CD4-positive, alpha-beta memory T cell (primary cell): ENCODE measurements at regions of chr1 and their contacts with region 1.

Region 1: DNA sequence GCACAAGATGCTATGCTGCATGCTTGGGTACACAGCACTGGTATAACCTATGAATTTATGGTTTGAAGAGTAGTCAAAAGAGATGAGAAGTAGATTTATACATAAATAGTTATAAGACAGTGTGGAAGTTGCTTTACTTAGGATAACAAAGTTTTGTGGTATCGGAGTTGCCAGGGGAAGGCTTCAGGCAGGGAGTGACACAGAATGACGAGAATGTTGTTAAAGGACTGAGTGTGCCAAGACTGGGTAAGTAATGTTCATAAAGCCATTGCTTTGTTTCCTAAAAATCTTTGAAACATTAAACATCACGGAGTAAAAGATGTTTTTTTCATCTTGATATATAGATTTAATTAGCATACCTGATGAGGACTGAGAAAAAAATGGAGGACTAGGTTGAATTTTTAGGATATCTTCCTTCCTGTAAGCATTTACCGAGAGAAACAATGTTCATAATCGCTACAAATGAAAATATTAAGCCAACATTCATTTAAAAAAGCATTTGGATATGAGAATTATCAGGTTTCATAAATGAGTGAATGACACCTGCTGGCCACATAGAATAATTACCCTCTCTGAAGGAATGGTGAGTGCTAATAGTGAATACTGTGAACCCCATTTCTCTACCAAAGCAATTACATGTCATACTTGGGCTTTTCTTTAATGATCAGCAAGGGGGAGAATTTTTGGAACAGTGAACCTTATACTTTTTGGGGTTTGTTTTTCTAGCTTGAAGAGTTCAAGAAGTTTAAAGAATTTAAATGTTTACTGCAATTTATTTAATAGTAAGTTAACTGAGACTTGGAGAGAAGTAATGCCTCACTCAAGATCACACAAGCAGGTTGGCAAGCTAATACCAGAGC is 28.4 kb downstream of the EXTL2 start:
- DNase-seq: peak in 4 of 5 donors; percentile 16 to 26 (median 22)
- H3K4me3 ChIP-seq: no peak overlapping the region
- H3K4me3 Mint-ChIP-seq: no peak overlapping the region
- H3K27ac ChIP-seq: no peak overlapping the region
- H3K27ac Mint-ChIP-seq: no peak overlapping the region
- H3K4me1 ChIP-seq: no peaks in the 10 kb centered on the region
- H3K4me1 Mint-ChIP-seq: peaks cover 0 to 1% (median 0%) of the 10 kb centered on the region in 4 donors
- H3K27me3 ChIP-seq: no peaks in the 10 kb centered on the region
- H3K27me3 Mint-ChIP-seq: peaks cover 0 to 2% of the 10 kb centered on the region in 2 donors

Region 2: GRCh38 chr1:99808391-99809115 is 1057.7 kb before region 1 on chr1:
- CTCF ChIA-PET with region 1: interaction called, 33 read pairs
- POLR2A ChIA-PET with region 1: no interaction called
- intact Hi-C with region 1: loop called (anchors 1 kb)
- DNase-seq: peak; percentile 43 to 60 (median 57)
- H3K4me3 ChIP-seq: no peak overlapping the region
- H3K4me3 Mint-ChIP-seq: peak overlapping the region in 1 of 8 donors; percentile 4
- H3K27ac ChIP-seq: no peak overlapping the region
- H3K27ac Mint-ChIP-seq: peak overlapping the region in 1 of 7 donors; percentile 13
- H3K4me1 ChIP-seq: no peaks in the 10 kb centered on the region
- H3K4me1 Mint-ChIP-seq: peaks cover 0 to 6% (median 3%) of the 10 kb centered on the region in 4 donors
- H3K27me3 ChIP-seq: no peaks in the 10 kb centered on the region
- H3K27me3 Mint-ChIP-seq: peaks cover 10 to 13% of the 10 kb centered on the region in 2 donors

Region 3: GRCh38 chr1:100277866-100278265 is 588.4 kb before region 1 on chr1:
- CTCF ChIA-PET with region 1: no interaction called
- POLR2A ChIA-PET with region 1: no interaction called
- intact Hi-C with region 1: loop called (anchors 5 kb)
- DNase-seq: peak; percentile 26 to 52 (median 40)
- H3K4me3 ChIP-seq: no peak overlapping the region
- H3K4me3 Mint-ChIP-seq: no peak overlapping the region
- H3K27ac ChIP-seq: no peak overlapping the region
- H3K27ac Mint-ChIP-seq: peak overlapping the region in 3 of 7 donors; percentile 55 to 81 (median 64)
- H3K4me1 ChIP-seq: peaks cover 9% of the 10 kb centered on the region
- H3K4me1 Mint-ChIP-seq: peaks cover 27 to 45% (median 34%) of the 10 kb centered on the region in 4 donors
- H3K27me3 ChIP-seq: no peaks in the 10 kb centered on the region
- H3K27me3 Mint-ChIP-seq: no peaks in the 10 kb centered on the region

Region 4: DNA sequence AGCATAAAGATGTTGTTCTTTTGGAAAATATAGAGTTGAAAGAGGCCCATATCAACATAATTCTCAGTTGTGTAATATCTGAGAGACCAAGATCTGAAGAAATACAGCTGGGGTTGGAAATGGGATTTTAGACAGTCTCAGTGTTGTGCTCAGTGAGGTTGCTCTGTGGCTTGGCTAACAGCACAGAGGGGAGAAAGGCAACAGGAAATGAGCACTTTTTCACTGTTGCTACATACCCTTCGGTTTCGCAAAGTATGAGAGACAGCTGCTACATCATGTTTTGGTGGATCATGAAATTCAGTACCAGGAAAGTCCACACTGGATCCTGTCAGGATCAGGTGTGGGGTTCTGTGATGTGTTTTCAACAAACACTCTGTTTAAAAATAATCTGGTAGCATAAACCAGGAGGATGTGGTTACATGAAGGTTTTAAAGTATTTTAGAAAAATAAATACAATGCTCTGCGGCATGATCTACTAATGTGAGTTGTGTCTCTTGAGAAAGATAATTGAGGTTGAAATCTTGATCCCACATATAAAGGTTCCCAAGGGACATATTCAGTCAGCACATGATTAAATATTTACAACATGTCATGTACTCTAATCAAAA is 335.3 kb before region 1 on chr1:
- CTCF ChIA-PET with region 1: no interaction called
- POLR2A ChIA-PET with region 1: no interaction called
- intact Hi-C with region 1: loop called (anchors 10 kb)
- DNase-seq: peak in 4 of 5 donors; percentile 17 to 30 (median 26)
- H3K4me3 ChIP-seq: no peak overlapping the region
- H3K4me3 Mint-ChIP-seq: peak overlapping the region in 7 of 8 donors; percentile 30 to 76 (median 49)
- H3K27ac ChIP-seq: no peak overlapping the region
- H3K27ac Mint-ChIP-seq: peak overlapping the region; percentile 13 to 87 (median 53)
- H3K4me1 ChIP-seq: peaks cover 32% of the 10 kb centered on the region
- H3K4me1 Mint-ChIP-seq: peaks cover 22 to 47% (median 33%) of the 10 kb centered on the region in 4 donors
- H3K27me3 ChIP-seq: no peaks in the 10 kb centered on the region
- H3K27me3 Mint-ChIP-seq: peaks cover 0 to 2% of the 10 kb centered on the region in 2 donors

Region 5: DNA sequence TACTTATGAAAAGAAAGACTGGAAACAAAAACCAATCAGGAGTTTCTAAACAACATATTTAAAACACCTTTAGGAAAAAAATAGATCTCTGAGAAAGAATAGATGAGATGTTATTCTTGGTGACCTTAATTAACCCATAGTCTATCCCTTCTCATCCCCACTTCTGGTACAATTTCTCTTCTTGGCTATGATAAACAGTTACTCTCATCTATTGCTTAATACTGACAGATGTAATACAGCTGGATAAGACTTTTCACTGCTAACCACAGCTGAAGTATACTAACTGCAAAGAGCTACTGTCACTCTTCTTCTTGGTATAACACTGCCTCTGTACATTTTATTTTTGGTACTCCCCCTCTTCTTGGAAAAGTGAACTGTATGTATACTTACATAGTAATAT is 13.2 kb after region 1 on chr1:
- CTCF ChIA-PET with region 1: interaction called, 24 read pairs
- POLR2A ChIA-PET with region 1: no interaction called
- intact Hi-C with region 1: no loop called
- DNase-seq: no peak
- H3K4me3 ChIP-seq: no peak overlapping the region
- H3K4me3 Mint-ChIP-seq: no peak overlapping the region
- H3K27ac ChIP-seq: no peak overlapping the region
- H3K27ac Mint-ChIP-seq: no peak overlapping the region
- H3K4me1 ChIP-seq: no peaks in the 10 kb centered on the region
- H3K4me1 Mint-ChIP-seq: no peaks in the 10 kb centered on the region
- H3K27me3 ChIP-seq: no peaks in the 10 kb centered on the region
- H3K27me3 Mint-ChIP-seq: no peaks in the 10 kb centered on the region

Region 6: DNA sequence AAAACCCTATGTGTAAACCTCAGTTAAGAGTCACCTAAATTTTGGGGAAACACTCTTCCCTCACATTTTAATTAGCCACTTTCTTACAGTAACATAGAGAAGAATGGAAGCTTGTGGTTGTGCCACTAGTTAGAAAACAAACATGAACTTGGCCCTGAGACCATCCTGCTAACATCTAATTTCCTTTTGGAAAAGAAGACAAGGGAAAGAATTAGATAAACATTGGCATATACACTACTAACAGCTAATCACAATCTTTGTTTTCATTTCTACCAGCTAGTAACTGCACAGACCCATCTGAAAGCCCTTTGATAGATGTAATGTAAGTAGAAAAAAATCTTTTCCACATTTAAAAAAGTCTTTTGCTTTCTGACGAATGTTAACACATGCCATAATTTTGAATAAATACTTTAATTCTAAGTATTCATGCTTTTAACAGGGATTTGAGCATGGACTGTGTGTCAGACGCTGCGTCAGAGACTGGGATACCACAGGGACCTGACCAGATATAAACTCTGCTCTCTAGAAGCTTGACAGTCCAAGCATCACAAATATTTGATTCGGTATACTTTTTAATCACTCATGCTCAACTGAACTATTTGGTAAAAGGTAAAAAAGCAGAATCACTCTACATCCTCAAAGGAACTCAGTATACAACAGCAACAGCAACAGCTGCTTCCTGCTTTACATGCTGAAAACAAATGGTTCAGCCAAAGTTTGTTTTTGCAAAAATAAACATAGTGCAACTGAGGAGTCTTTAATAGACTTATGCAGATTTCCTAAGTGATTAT is 129.1 kb after region 1 on chr1:
- CTCF ChIA-PET with region 1: no interaction called
- POLR2A ChIA-PET with region 1: no interaction called
- intact Hi-C with region 1: no loop called
- DNase-seq: peak in 2 of 5 donors; percentile 3 to 8
- H3K4me3 ChIP-seq: no peak overlapping the region
- H3K4me3 Mint-ChIP-seq: peak overlapping the region in 4 of 8 donors; percentile 11 to 43 (median 41)
- H3K27ac ChIP-seq: no peak overlapping the region
- H3K27ac Mint-ChIP-seq: peak overlapping the region in 6 of 7 donors; percentile 18 to 87 (median 62)
- H3K4me1 ChIP-seq: peaks cover 21% of the 10 kb centered on the region
- H3K4me1 Mint-ChIP-seq: peaks cover 17 to 27% (median 23%) of the 10 kb centered on the region in 4 donors
- H3K27me3 ChIP-seq: no peaks in the 10 kb centered on the region
- H3K27me3 Mint-ChIP-seq: no peaks in the 10 kb centered on the region